ENCODE measurements at regions of chr9 and their contacts with region 1.

Region 1: GRCh38 chr9:127943731-127944144 is 6.1 kb upstream of the DPM2 start:
- DNase-seq: peak; percentile 73
- H3K4me3 Mint-ChIP-seq: no peak overlapping the region
- H3K27ac Mint-ChIP-seq: no peak overlapping the region
- H3K4me1 Mint-ChIP-seq: peaks cover 11% of the 10 kb centered on the region
- H3K27me3 Mint-ChIP-seq: no peaks in the 10 kb centered on the region
- CTCF ChIP-seq: peak; percentile 91

Region 2: GRCh38 chr9:126956917-126957686 is 986.6 kb before region 1 on chr9:
- CTCF ChIA-PET with region 1: no interaction called
- POLR2A ChIA-PET with region 1: no interaction called
- intact Hi-C with region 1: no loop called
- DNase-seq: peak; percentile 75
- H3K4me3 Mint-ChIP-seq: no peak overlapping the region
- H3K27ac Mint-ChIP-seq: no peak overlapping the region
- H3K4me1 Mint-ChIP-seq: peaks cover 11% of the 10 kb centered on the region
- H3K27me3 Mint-ChIP-seq: peaks cover 22% of the 10 kb centered on the region
- CTCF ChIP-seq: no peak

Region 3: DNA sequence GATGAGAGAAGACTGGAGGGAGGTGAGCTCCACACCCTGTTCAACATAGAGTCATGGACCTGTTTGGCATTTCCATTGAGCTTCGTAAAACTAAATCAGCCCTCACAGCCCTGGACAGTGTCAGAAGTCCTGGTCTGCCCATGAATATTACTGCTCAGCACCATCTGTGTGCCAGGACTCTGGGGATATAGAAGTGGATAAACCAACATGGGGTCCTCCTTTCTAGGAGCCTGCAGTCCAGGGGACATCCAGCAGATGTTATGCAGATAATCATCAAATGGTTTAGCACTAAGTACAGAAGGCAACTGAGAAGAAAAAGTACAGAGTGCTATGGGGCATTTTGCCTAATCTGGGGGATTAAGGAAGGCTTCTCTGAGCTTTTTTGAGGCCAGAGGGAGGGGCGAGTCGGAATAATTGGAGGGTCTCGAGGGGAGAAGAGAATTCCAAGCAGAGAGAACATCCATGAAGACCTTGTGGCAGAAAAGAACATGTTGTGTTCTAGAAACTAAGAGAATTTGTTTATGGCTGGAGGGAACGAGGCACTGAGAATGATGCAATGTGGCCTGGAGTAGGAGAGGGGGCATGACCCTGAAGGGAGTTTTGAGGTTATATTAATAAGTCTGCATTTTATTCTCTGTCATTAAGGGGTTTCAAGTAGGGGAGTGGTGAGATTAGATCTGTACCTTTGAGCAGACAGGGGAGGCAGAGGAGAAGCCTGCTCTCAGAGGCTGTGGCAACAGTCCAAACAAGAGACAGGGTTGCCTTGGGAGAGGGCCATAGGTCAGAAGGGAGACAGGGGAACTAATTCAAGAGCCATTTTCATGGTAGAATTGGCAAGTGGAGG is 610.3 kb before region 1 on chr9:
- CTCF ChIA-PET with region 1: no interaction called
- POLR2A ChIA-PET with region 1: no interaction called
- intact Hi-C with region 1: no loop called
- DNase-seq: no peak
- H3K4me3 Mint-ChIP-seq: no peak overlapping the region
- H3K27ac Mint-ChIP-seq: peak overlapping the region; percentile 29
- H3K4me1 Mint-ChIP-seq: peaks cover 42% of the 10 kb centered on the region
- H3K27me3 Mint-ChIP-seq: no peaks in the 10 kb centered on the region
- CTCF ChIP-seq: no peak

Region 4: DNA sequence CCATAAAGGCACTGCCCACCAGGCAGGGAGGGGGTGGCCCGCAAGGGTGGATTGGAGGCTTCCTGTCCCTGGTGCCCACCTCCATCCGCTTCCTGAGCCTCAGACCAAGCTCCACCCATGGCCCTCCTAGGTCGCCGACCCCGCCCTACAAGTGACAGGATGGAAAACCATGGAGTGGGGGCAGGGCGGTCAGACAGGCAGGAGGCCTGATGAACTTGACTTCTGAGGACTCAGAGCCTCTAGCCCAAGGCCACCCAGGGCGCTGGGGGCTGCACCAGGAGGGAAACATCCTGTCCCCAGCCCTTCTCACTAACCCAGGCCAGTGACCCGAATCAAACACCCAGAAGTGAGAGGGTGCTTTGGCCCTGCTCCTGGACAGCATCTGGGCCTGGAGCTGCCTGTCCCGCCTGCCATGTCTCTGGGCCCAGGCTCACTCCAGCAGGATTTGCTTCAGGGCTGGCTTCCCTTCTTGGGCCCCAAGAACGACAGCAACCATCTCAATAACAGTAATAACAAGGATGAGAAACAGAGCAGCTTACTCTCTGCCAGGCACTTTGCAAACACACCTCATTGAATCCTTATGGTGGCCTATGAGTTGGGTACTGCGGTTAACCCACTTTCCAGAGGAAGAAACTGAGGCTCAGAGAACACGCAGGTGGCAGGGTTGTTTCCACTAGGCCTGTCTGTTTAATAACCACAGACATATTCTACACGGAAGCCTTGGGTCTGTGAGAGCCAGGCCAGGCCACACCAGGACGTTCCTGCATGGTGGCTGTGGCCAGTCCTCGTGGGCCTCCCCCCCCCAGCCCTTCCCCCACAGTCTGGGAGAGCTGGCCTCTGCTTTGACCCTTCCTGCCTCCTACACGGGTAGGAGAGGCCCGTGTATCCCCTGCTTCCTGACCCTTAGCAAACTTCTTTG is 39.9 kb before region 1 on chr9:
- CTCF ChIA-PET with region 1: no interaction called
- POLR2A ChIA-PET with region 1: no interaction called
- intact Hi-C with region 1: no loop called
- DNase-seq: no peak
- H3K4me3 Mint-ChIP-seq: no peak overlapping the region
- H3K27ac Mint-ChIP-seq: no peak overlapping the region
- H3K4me1 Mint-ChIP-seq: peaks cover 6% of the 10 kb centered on the region
- H3K27me3 Mint-ChIP-seq: no peaks in the 10 kb centered on the region
- CTCF ChIP-seq: no peak

Region 5: DNA sequence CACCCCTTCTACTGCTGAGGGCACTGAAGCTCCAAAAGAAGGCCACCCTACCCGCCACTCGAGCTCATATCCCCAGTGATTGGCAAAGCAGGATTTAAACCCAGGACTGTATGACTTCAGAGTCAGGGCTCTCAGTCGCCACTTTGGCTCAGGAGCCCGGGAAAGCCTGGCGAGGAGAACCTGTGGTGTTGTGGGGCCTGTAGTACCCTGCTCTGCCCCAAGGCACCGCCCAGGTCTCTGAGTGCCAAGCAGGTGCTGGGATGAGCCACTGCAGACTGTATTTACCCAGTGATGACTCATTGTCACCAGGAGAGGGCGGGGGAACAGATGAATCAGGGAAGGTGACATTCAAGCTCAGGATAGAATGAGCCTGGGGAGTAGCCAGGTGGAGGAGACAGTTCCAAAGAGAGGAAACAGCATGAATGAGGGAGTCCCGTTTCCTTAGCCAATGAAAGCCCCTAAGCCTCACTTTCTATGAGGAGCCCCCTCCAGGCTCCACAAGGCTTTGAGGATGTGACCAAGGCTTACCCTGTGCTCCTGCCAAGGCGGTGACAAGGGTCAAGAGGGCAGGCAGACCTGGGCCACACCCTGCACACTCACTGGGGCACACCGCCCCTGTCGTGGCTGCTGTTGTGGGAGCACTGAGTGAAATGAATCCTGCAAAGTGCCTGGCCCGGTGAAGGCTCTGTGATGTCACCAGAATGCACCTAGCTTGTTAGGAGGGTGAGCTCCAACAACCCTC is 11.7 kb after region 1 on chr9:
- CTCF ChIA-PET with region 1: interaction called, 90 read pairs
- POLR2A ChIA-PET with region 1: interaction called, 6 read pairs
- intact Hi-C with region 1: no loop called
- DNase-seq: peak; percentile 81
- H3K4me3 Mint-ChIP-seq: peak overlapping the region; percentile 29
- H3K27ac Mint-ChIP-seq: no peak overlapping the region
- H3K4me1 Mint-ChIP-seq: peaks cover 24% of the 10 kb centered on the region
- H3K27me3 Mint-ChIP-seq: no peaks in the 10 kb centered on the region
- CTCF ChIP-seq: peak; percentile 36

Region 6: GRCh38 chr9:127980706-127981558 is 37.2 kb after region 1 on chr9 and contains the start of gene EEIG1:
- CTCF ChIA-PET with region 1: interaction called, 27 read pairs
- POLR2A ChIA-PET with region 1: interaction called, 5 read pairs
- intact Hi-C with region 1: no loop called
- DNase-seq: peak; percentile 89
- H3K4me3 Mint-ChIP-seq: peak within 1 kb of the TSS; percentile 89
- H3K27ac Mint-ChIP-seq: peak within 1 kb of the TSS; percentile 71
- H3K4me1 Mint-ChIP-seq: peaks cover 17% of the 10 kb centered on the region
- H3K27me3 Mint-ChIP-seq: no peaks in the 10 kb centered on the region
- CTCF ChIP-seq: no peak
- total RNA-seq, gene EEIG1: 17.5 and 23.9 TPM in 2 replicates

Region 7: DNA sequence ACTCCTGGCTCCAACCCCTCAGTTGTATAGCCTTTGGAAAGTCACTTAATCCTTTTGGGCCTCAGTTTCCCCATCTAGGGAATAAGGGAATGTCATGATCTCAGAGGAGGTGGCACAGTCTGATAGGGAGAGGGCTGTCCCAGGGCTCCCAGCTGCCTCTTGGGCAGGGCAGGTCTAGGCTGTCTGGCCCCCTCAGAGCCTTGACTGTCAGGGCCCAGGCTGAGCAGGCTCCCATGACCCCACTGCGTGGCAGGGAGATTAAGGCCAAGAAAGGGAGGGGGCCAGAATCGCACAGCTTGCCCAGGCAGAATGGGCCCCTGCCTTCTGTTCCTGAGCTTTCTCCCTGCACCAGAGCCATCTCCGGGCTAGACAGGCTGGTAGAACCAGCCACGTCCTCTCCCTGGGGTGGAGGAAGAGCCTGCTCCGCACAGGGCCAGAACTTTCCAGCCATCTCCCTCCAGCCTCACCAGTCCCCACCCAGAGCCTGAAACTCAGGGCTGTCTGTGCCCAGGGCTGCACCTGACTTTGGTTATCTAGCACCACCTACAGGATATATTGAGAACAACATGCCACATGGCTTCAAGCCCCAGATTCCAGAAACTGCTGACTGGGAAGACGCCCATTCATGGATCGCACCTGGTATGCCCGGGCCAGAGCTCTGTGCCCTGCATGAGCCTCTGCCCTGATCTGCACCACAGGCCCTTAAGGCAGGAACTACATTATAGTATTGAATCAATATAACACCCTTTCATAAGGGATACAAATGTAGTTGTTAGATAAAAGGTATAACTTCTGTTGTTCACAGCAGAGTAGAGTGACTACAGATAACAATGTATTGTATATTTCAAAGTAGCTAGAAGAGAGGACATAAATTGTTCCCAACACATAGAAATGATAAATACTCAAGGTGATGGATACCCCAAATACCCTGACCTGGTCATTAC is 91.4 kb after region 1 on chr9:
- CTCF ChIA-PET with region 1: interaction called, 172 read pairs
- POLR2A ChIA-PET with region 1: interaction called, 19 read pairs
- intact Hi-C with region 1: loop called (anchors 1 kb)
- DNase-seq: peak; percentile 88
- H3K4me3 Mint-ChIP-seq: no peak overlapping the region
- H3K27ac Mint-ChIP-seq: no peak overlapping the region
- H3K4me1 Mint-ChIP-seq: no peaks in the 10 kb centered on the region
- H3K27me3 Mint-ChIP-seq: no peaks in the 10 kb centered on the region
- CTCF ChIP-seq: peak; percentile 81

Region 8: GRCh38 chr9:128081056-128081455 is 137.3 kb after region 1 on chr9:
- CTCF ChIA-PET with region 1: interaction called, 4 read pairs
- POLR2A ChIA-PET with region 1: interaction called, 3 read pairs
- intact Hi-C with region 1: loop called (anchors 1 kb)
- DNase-seq: no peak
- H3K4me3 Mint-ChIP-seq: no peak overlapping the region
- H3K27ac Mint-ChIP-seq: no peak overlapping the region
- H3K4me1 Mint-ChIP-seq: peaks cover 26% of the 10 kb centered on the region
- H3K27me3 Mint-ChIP-seq: no peaks in the 10 kb centered on the region
- CTCF ChIP-seq: no peak

Region 9: GRCh38 chr9:128271108-128271507 is 327.4 kb after region 1 on chr9:
- CTCF ChIA-PET with region 1: no interaction called
- POLR2A ChIA-PET with region 1: no interaction called
- intact Hi-C with region 1: no loop called
- DNase-seq: peak; percentile 44
- H3K4me3 Mint-ChIP-seq: no peak overlapping the region
- H3K27ac Mint-ChIP-seq: no peak overlapping the region
- H3K4me1 Mint-ChIP-seq: peaks cover 10% of the 10 kb centered on the region
- H3K27me3 Mint-ChIP-seq: no peaks in the 10 kb centered on the region
- CTCF ChIP-seq: no peak